ENCODE measurements at regions of chr3 and their contacts with region 1.

Region 1: GRCh38 chr3:120678331-120678947 is 3.6 kb downstream of the HGD start:
- DNase-seq: peak; percentile 93
- H3K4me3 Mint-ChIP-seq: peak overlapping the region; percentile 9
- H3K27ac Mint-ChIP-seq: peak overlapping the region; percentile 4
- H3K4me1 Mint-ChIP-seq: peaks cover 16% of the 10 kb centered on the region
- H3K27me3 Mint-ChIP-seq: no peaks in the 10 kb centered on the region
- CTCF ChIP-seq: no peak

Region 2: GRCh38 chr3:120348981-120349818 is 329.2 kb before region 1 on chr3 and contains the start of gene LRRC58:
- CTCF ChIA-PET with region 1: no interaction called
- POLR2A ChIA-PET with region 1: no interaction called
- intact Hi-C with region 1: no loop called
- DNase-seq: peak; percentile 95
- H3K4me3 Mint-ChIP-seq: peak within 1 kb of the TSS; percentile 77
- H3K27ac Mint-ChIP-seq: peak within 1 kb of the TSS; percentile 83
- H3K4me1 Mint-ChIP-seq: peaks cover 34% of the 10 kb centered on the region
- H3K27me3 Mint-ChIP-seq: no peaks in the 10 kb centered on the region
- CTCF ChIP-seq: peak; percentile 8
- total RNA-seq, gene LRRC58: 25.8 and 28.8 TPM in 2 replicates

Region 3: DNA sequence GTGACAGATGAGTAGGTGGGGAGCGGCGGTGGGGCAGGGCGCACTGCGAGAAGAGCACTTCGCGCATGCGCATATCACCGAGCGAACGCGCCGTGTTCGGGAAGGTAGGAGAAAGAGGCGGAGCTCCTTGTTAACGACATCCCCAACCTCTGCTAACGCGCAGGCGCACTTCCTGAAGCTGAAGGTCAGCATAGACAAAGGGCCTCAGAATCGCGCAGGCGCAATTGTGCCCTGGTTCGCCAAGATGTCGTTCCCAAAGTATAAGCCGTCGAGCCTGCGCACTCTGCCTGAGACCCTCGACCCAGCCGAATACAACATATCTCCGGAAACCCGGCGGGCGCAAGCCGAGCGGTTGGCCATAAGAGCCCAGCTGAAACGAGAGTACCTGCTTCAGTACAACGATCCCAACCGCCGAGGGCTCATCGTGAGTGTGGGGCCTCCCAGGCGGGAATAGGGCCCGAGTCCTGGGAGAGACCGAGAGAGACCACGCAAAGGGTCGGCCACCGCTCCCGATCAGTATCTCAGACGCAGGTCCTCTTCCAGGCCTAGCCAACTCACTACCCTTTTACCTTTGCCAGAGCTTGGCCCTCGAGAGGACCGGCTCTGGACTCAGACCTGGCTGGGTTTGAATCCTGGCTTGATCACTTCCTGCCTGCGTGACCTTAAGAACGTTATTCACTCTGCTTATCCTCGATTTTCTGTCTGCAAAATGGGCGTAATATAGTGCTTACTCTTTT is 82.2 kb before region 1 on chr3 and contains the start of gene NDUFB4:
- CTCF ChIA-PET with region 1: interaction called, 3 read pairs
- POLR2A ChIA-PET with region 1: interaction called, 10 read pairs
- intact Hi-C with region 1: no loop called
- DNase-seq: peak; percentile 99
- H3K4me3 Mint-ChIP-seq: peak within 1 kb of the TSS; percentile 92
- H3K27ac Mint-ChIP-seq: peak within 1 kb of the TSS; percentile 95
- H3K4me1 Mint-ChIP-seq: peaks cover 5% of the 10 kb centered on the region
- H3K27me3 Mint-ChIP-seq: peaks cover 11% of the 10 kb centered on the region
- CTCF ChIP-seq: no peak
- total RNA-seq, gene NDUFB4: 96.1 and 113 TPM in 2 replicates

Region 4: DNA sequence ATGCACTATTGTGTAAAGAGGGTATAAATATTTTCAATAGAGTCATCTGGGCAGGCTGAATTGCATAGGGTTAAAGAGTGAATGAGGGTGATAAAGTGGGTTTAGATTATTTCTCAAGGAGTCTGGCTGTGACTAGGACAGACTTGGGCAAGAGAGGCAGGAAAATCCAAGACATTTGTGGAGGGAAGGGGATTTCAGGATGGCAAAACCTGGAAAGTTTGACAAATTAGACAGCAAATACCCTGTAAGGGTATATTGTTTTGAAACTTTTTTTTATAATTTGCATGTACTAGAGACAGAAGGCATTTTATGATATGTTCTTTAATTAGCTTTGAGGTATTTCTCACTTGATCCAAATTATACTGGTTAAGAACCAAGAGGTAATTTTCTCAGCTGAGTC is 13.5 kb before region 1 on chr3:
- CTCF ChIA-PET with region 1: no interaction called
- POLR2A ChIA-PET with region 1: no interaction called
- intact Hi-C with region 1: no loop called
- DNase-seq: no peak
- H3K4me3 Mint-ChIP-seq: no peak overlapping the region
- H3K27ac Mint-ChIP-seq: no peak overlapping the region
- H3K4me1 Mint-ChIP-seq: no peaks in the 10 kb centered on the region
- H3K27me3 Mint-ChIP-seq: peaks cover 39% of the 10 kb centered on the region
- CTCF ChIP-seq: no peak

Measured in MCF 10A (cell line).